ENCODE measurements at regions of chr19 and their contacts with region 1.

Region 1: GRCh38 chr19:1279782-1280341 is 4.5 kb downstream of the FAM174C start:
- DNase-seq: peak; percentile 90
- ATAC-seq: peak; percentile 44

Region 2: GRCh38 chr19:1304197-1304924 is 24.5 kb after region 1 on chr19:
- intact Hi-C with region 1: no loop called
- DNase-seq: no peak
- ATAC-seq: no peak

Region 3: GRCh38 chr19:1394252-1395193 is 114.7 kb after region 1 on chr19:
- intact Hi-C with region 1: loop called (anchors 10 kb)
- DNase-seq: no peak
- ATAC-seq: peak; percentile 3

Region 4: GRCh38 chr19:1417145-1417544 is 137.3 kb after region 1 on chr19:
- intact Hi-C with region 1: no loop called
- DNase-seq: no peak
- ATAC-seq: peak; percentile 18

Measured in sciatic nerve (tissue), 2 donors.